IMR-90 (cell line): ENCODE measurements at regions of chr13 and their contacts with region 1.

Region 1: DNA sequence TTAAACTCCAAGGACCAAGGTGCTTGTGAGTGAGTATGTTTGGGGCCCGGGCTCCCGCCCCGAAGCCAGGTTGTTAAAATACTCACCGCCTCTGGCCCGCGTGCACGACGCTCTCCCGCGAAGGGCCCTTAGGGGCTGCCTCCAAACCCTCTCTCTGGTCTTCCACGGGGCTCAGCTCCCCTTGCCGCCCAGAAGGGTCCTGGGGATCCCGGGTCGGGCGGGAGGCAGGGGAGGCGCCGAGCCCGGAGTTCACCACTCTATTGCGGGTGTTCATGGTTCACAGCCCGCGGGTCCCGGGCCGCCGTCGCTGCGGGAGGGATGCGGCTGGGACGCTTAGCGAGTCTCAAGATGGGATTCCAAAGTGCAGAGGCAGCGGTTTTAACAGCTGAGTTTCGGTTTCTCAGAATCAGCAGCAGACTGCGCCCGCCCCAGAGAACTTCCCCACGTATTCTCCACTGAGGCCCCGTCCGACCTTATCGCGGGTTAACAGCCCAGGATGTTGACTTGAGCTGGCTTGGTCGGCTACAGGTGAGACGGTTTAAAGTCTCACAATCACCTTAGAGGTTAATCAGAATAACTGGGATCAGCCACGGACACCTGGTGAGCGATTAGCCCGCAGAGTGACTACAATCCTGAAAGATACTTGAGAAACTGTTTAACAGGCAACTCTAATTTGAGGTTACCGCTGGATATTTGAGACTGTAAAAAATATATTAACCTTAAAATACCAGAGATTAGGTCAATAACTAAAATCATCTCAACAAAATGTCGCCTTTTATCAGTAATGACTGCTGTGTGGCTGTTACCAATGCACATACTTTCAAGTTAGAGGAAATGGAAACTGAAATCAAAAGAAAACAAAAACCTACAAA is at the start of gene EPSTI1:
- DNase-seq: peak; percentile 74
- ATAC-seq: peak; percentile 84
- H3K4me3 ChIP-seq: peak within 1 kb of the TSS; percentile 43
- H3K27ac ChIP-seq: peak within 1 kb of the TSS; percentile 43
- H3K4me1 ChIP-seq: peaks cover 2% of the 10 kb centered on the region
- H3K27me3 ChIP-seq: no peaks in the 10 kb centered on the region
- CTCF ChIP-seq: no peak
- POLR2A ChIP-seq: no peak
- RAD21 ChIP-seq: no peak
- total RNA-seq, gene EPSTI1: 0.90 and 1.1 TPM in 2 replicates

Region 2: DNA sequence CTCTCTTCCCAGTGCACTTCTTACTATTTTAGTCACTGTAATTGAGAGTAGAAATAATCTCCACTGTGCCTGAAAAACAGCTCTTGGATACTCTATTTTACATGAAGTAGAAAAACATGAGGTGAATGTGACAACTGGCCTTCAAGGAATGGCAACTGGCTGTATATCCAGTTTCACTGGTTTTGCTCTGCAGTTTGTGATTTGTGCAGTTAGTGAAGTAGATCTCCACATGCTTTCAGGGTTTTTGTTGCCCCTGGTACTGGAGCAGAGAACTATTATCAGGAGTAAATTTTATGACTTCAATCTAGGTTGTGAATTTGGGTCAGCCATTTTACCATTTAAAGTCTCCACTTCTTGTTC is 552.0 kb before region 1 on chr13:
- CTCF ChIA-PET with region 1: no interaction called
- POLR2A ChIA-PET with region 1: no interaction called
- dilution Hi-C with region 1: no loop called
- in situ Hi-C with region 1: no loop called
- intact Hi-C with region 1: no loop called
- DNase-seq: no peak
- ATAC-seq: no peak
- H3K4me3 ChIP-seq: no peak overlapping the region
- H3K27ac ChIP-seq: no peak overlapping the region
- H3K4me1 ChIP-seq: no peaks in the 10 kb centered on the region
- H3K27me3 ChIP-seq: no peaks in the 10 kb centered on the region
- CTCF ChIP-seq: no peak
- POLR2A ChIP-seq: no peak
- RAD21 ChIP-seq: no peak

Region 3: GRCh38 chr13:42926555-42926954 is 65.6 kb before region 1 on chr13:
- CTCF ChIA-PET with region 1: no interaction called
- POLR2A ChIA-PET with region 1: interaction called, 15 read pairs
- dilution Hi-C with region 1: no loop called
- in situ Hi-C with region 1: no loop called
- intact Hi-C with region 1: no loop called
- DNase-seq: no peak
- ATAC-seq: no peak
- H3K4me3 ChIP-seq: no peak overlapping the region
- H3K27ac ChIP-seq: no peak overlapping the region
- H3K4me1 ChIP-seq: no peaks in the 10 kb centered on the region
- H3K27me3 ChIP-seq: no peaks in the 10 kb centered on the region
- CTCF ChIP-seq: no peak
- POLR2A ChIP-seq: no peak
- RAD21 ChIP-seq: no peak

Region 4: GRCh38 chr13:43185226-43185625 is 193.1 kb after region 1 on chr13:
- CTCF ChIA-PET with region 1: no interaction called
- POLR2A ChIA-PET with region 1: no interaction called
- dilution Hi-C with region 1: no loop called
- in situ Hi-C with region 1: no loop called
- intact Hi-C with region 1: no loop called
- DNase-seq: no peak
- ATAC-seq: no peak
- H3K4me3 ChIP-seq: no peak overlapping the region
- H3K27ac ChIP-seq: no peak overlapping the region
- H3K4me1 ChIP-seq: no peaks in the 10 kb centered on the region
- H3K27me3 ChIP-seq: no peaks in the 10 kb centered on the region; the same call in 1 of the 2 replicates
- CTCF ChIP-seq: no peak
- POLR2A ChIP-seq: no peak
- RAD21 ChIP-seq: no peak